ENCODE measurements at regions of chr17 and their contacts with region 1.

Region 1: DNA sequence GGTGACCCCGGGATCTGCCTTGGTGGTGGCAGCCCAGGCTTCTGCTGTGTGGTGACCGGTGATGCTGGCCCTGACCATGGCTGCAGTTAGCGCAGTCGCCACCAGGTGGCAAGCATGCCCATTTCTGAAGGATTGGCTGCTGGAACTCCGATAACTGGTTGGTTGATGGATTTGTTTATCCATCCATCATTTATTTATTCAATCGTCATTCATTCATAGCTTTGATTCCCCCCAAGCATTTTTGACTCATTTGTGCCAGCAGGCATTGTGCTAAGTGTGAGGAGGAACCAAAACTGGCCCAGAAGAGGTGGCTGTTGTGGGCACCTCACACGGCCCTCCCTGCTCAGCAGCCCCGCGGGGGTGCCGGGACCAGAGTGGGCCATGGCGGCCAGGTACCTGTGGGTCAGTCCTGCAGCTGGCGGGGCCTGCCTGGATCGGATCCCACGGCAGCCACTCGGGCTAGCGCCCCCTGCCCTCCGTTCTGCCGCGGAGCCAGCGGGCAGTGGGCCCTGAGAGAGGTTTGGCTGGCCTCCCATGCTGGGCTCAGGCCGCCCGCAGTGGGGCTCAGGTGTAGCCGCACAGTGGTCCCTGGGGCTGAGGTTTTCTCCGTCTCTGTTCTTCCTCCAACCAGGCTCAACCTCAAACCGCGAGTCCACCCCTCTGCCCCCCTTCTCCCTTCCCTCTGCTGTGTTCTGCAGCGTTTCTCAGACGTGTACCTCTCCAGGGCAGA is 28.8 kb upstream of the ITGA3 start:
- DNase-seq: peak; percentile 90
- H3K4me3 ChIP-seq: peak overlapping the region in 4 of 8 donors; percentile 9 to 53 (median 16)
- H3K27ac ChIP-seq: peak overlapping the region in 5 of 8 donors; percentile 39 to 62 (median 50)
- H3K4me1 ChIP-seq: peaks cover 6 to 28% (median 12%) of the 10 kb centered on the region in 6 donors
- H3K27me3 ChIP-seq: peaks cover 0 to 34% (median 15%) of the 10 kb centered on the region in 7 donors
- CTCF ChIP-seq: peak; percentile 79 to 98 (median 97)
- POLR2A ChIP-seq: no peak

Region 2: GRCh38 chr17:50087246-50087911 is 60.3 kb after region 1 on chr17:
- intact Hi-C with region 1: loop called (anchors 2 kb)
- DNase-seq: peak; percentile 91
- H3K4me3 ChIP-seq: no peak overlapping the region
- H3K27ac ChIP-seq: no peak overlapping the region
- H3K4me1 ChIP-seq: peaks cover 0 to 4% (median 0%) of the 10 kb centered on the region in 6 donors
- H3K27me3 ChIP-seq: no peaks in the 10 kb centered on the region
- CTCF ChIP-seq: peak; percentile 93 to 98 (median 96)
- POLR2A ChIP-seq: no peak

Measured in spleen (tissue), 13 donors.